Heart left ventricle (tissue), 16 donors: ENCODE measurements at regions of chr11 and their contacts with region 1.

Region 1: GRCh38 chr11:94731880-94732601 is 36.1 kb upstream of the AMOTL1 start:
- DNase-seq: peak in 3 of 5 donors; percentile 26 to 48 (median 42)
- ATAC-seq: peak; percentile 57 to 90 (median 84)
- H3K4me3 ChIP-seq: no peak overlapping the region
- H3K27ac ChIP-seq: peak overlapping the region; percentile 46 to 86 (median 80)
- H3K4me1 ChIP-seq: peaks cover 0 to 39% (median 28%) of the 10 kb centered on the region in 12 donors
- H3K27me3 ChIP-seq: no peaks in the 10 kb centered on the region
- CTCF ChIP-seq: no peak
- POLR2A ChIP-seq: no peak

Region 2: GRCh38 chr11:94767761-94768601 is 35.9 kb after region 1 on chr11 and contains the start of gene AMOTL1:
- intact Hi-C with region 1: loop called in 1 of 10 experiments (anchors 5 kb)
- DNase-seq: peak; percentile 91 to 94 (median 93)
- ATAC-seq: peak; percentile 89 to 97 (median 94)
- H3K4me3 ChIP-seq: peak within 1 kb of the TSS; percentile 77 to 97 (median 85)
- H3K27ac ChIP-seq: peak within 1 kb of the TSS; percentile 76 to 99 (median 96)
- H3K4me1 ChIP-seq: peaks cover 2 to 37% (median 19%) of the 10 kb centered on the region in 12 donors
- H3K27me3 ChIP-seq: no peaks in the 10 kb centered on the region
- CTCF ChIP-seq: peak in 4 of 12 donors; percentile 7 to 37 (median 24)
- POLR2A ChIP-seq: peak; percentile 17 to 78
- total RNA-seq, gene AMOTL1: 24.4 to 76.0 (median 51.7) TPM